Right ventricle myocardium superior (tissue), 1 donor: ENCODE measurements at regions of chr21 and their contacts with region 1.

Region 1: DNA sequence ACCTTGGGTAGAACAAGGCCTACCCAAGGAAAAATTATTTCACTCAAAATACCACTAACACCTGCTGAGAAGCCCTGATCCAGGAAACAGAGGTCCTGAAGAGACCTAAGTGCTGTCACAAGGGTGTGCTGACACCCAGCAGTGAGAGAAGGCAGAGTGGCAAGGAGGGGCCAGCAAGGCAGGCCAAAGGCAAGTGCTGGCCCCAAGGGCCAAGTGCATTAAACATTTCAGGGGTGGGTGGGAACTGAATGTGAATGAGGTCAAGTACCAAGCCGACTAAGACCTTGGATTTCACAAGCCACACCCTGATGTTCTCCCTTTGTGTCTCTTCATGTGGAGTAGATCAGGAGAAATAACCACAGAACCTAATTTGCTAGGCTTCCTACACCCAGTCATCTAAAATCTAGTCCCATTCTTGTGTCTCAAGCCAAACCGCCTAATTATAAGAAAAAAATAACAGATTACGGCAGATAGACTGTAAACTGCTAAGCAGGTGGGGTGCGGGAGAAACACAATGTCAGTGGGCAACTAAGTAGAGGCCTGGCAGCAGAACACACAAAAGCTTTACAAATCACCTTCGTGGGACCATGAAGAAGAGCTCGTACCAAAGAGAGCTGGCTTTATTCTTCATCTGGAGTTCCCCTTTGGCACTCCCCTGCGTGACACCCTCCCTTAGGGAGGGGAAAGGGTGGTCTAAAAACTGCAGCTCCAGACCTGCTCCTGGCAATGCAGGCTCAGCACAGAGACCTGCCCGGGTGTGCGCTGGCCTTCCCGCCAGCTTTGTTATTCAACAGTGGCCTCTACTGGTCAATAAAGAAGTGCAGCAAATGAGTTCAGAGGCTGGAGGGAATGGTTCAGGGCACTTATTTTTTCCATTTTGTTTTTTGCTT is 8.7 kb downstream of the UBE2G2 start:
- DNase-seq: peak; percentile 71
- ATAC-seq: peak; percentile 93

Region 2: DNA sequence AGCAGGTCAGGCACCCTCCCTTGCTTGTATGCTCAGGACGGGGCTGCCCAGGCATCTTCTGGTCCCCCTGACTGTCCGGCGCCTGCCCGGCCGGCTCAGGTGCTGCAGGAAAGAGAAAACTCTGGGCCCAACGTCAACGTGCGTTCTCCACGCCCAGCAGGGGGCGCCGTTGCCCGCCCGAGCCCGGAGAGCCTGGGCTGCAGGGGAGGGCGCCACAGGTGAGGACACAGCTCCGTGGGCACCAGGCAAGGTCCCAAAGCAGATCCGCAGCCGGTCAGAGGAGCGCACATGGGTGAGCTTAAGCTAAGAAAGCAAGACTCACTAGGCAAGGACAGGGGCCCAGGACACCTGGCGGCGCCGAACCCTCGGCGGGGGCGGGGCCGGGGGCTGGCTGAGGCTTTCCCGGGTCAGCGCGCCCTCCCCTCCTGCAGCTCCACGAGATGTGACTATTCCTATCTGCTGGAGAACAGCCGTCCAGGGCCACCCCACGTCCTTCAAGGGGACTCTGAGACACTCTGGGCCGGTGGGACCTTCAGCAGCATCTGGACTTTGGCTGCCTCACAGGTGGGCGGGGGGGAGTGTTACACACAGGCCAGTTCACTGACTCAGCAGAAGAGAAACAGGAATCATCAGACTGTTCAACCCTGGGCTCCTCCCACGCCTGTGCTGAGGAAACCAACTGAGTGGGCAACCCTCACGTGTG is 282.3 kb before region 1 on chr21:
- intact Hi-C with region 1: loop called (anchors 10 kb)
- DNase-seq: peak; percentile 67
- ATAC-seq: peak; percentile 71

Region 3: GRCh38 chr21:44897326-44898010 is 104.5 kb after region 1 on chr21:
- intact Hi-C with region 1: no loop called
- DNase-seq: peak; percentile 64
- ATAC-seq: peak; percentile 47